Activated CD8-positive, alpha-beta T cell treated with anti-CD3 and anti-CD28 coated beads, Interleukin-2, amount 10 ng/mL, durations not matched to agents 7 days and 5 days (primary cell): ENCODE measurements at regions of chr20 and their contacts with region 1.

Region 1: DNA sequence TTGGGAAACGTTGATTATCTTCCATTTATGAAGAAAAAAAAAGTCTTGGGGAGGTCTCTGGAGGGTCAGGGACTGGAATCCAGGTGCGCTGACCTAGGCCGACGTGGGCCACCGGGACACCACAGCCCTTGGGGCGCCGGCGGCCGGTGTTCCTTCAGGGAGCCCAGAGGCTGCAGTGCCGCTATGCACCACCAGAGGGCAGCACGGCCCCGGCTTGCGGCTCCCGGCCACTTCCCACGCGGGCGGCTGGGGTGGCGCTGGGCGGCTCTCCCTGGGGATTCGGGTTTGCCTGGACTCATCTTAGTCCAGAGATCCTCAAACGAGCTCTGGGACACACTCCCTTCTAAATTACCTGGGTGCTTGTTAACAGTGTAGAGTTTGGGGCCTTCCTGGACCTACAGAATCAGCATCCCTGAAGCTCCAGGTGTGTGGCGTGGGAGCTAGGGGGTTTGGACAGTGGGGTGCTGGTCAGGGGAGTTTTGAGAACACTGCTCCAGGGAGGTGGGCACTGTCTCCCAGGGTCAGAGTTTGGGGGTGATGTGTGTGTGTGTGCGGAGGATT is 23.0 kb upstream of the GTSF1L start:
- DNase-seq: peak; percentile 83
- ATAC-seq: peak; percentile 39
- H3K4me3 Mint-ChIP-seq: no peak overlapping the region
- H3K27ac Mint-ChIP-seq: peak overlapping the region; percentile 68
- H3K4me1 Mint-ChIP-seq: peaks cover 46% of the 10 kb centered on the region
- H3K27me3 Mint-ChIP-seq: no peaks in the 10 kb centered on the region

Region 2: DNA sequence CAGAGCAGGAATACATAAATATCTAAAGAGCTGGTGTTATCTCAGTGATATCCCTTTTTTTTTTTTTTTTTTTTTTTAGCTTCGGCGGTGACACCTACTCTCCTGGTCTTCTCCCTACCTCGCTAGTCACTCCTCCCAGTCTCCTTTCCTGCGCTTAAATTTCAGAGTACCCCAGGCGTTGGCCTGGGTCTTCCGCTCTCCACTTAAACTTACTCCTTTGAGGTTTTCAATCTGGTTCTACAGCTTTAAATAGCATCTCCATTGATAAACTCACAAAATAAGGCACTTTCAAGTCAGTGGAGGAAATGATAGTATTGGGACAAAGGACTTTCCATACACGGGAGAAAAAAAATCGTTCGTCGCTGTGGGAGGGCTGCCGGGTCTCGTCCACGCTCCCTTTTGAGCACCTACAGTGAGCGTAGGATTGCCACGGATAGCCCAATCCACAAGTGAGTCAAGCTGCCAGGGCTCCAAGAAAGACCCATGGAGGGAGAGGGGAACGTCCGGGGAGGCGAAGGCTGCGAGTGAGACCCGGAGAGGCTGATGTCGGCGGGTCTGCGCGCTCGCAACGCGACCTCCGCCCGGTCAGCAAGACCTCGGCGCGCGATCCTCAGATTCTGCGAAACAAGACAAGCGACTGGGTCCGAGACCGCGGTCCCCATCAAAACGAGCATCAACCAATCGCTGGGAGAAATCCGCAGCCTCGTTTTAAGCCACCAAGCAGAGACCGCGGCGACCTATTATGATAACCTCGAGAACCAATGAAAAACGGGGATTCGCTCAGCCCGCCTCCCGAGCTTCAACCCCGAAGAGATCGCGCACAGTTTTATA is 292.8 kb before region 1 on chr20:
- CTCF ChIA-PET with region 1: no interaction called
- POLR2A ChIA-PET with region 1: interaction called, 11 read pairs
- DNase-seq: peak; percentile 93
- ATAC-seq: peak; percentile 84
- H3K4me3 Mint-ChIP-seq: peak overlapping the region; percentile 92
- H3K27ac Mint-ChIP-seq: peak overlapping the region; percentile 99
- H3K4me1 Mint-ChIP-seq: peaks cover 37% of the 10 kb centered on the region
- H3K27me3 Mint-ChIP-seq: peaks cover 11% of the 10 kb centered on the region

Region 3: DNA sequence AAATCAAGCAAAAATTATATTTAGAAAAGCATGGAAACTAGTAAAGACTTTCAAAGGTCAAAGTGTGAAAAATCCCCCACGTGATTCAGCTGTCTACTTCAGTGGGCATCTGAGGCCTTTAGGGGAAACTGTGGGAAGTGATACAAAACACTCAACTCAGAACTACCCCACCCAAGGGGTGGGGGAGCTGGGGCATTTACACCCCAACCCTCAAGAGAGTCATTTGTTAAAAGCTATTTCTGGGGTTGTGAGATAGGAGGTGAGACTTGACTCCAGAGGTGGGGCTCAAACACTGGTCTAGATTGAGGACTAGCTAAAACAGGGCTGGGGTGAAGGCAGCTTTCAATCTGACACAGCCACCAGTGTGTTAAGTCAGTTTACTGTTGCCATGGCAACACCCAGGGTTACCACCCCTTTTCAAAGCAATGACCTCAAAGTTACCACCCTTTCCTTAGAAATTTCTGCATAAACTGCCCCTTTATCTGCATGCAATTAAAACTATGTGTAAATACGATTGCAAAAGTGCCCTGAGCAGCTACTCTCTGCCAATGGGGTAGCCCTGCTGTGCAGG is 13.1 kb before region 1 on chr20:
- CTCF ChIA-PET with region 1: interaction called, 11 read pairs
- POLR2A ChIA-PET with region 1: interaction called, 5 read pairs
- DNase-seq: peak; percentile 41
- ATAC-seq: peak; percentile 73
- H3K4me3 Mint-ChIP-seq: no peak overlapping the region
- H3K27ac Mint-ChIP-seq: no peak overlapping the region
- H3K4me1 Mint-ChIP-seq: peaks cover 23% of the 10 kb centered on the region
- H3K27me3 Mint-ChIP-seq: no peaks in the 10 kb centered on the region

Region 4: GRCh38 chr20:43942661-43943290 is 193.0 kb after region 1 on chr20:
- CTCF ChIA-PET with region 1: interaction called, 12 read pairs
- POLR2A ChIA-PET with region 1: interaction called, 4 read pairs
- DNase-seq: peak; percentile 53
- ATAC-seq: peak; percentile 79
- H3K4me3 Mint-ChIP-seq: peak overlapping the region; percentile 17
- H3K27ac Mint-ChIP-seq: peak overlapping the region; percentile 74
- H3K4me1 Mint-ChIP-seq: peaks cover 60% of the 10 kb centered on the region
- H3K27me3 Mint-ChIP-seq: peaks cover 45% of the 10 kb centered on the region

Region 5: GRCh38 chr20:44069203-44070011 is 319.6 kb after region 1 on chr20:
- CTCF ChIA-PET with region 1: interaction called, 13 read pairs
- POLR2A ChIA-PET with region 1: interaction called, 22 read pairs
- DNase-seq: peak; percentile 88
- ATAC-seq: peak; percentile 63
- H3K4me3 Mint-ChIP-seq: peak overlapping the region; percentile 72
- H3K27ac Mint-ChIP-seq: peak overlapping the region; percentile 93
- H3K4me1 Mint-ChIP-seq: peaks cover 74% of the 10 kb centered on the region
- H3K27me3 Mint-ChIP-seq: peaks cover 17% of the 10 kb centered on the region